ENCODE measurements at regions of chrX and their contacts with region 1.

Region 1: DNA sequence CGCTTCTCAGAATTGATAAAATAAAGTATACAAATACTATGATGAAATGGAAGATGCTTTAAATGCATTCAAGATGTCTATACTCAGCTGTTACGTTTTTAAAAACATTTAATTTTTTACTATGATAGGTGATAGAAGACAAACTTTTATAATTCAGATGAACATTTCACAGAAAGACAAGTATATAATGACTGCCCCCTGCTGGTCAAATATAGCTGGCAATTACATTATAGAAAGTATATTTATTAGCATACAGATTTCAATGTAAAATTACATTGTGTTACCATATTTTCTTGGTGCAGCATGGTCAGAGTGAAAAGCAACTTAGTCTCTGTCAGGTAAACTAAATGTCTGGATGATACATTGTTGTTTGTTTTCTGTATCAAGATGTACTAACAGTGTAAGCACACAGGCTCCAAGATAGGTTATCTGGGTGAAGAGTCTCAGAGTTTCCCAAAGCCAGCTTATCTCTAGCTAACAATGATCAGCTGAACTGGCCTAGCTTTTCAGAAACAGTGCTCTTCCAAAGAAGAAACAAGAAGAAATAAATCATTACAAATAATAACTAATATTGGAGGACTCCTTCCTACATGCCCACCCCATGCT is 54.1 kb downstream of the SRPX start:
- DNase-seq: no peak
- H3K4me3 Mint-ChIP-seq: no peak overlapping the region
- H3K27ac Mint-ChIP-seq: no peak overlapping the region
- H3K4me1 Mint-ChIP-seq: no peaks in the 10 kb centered on the region
- H3K27me3 Mint-ChIP-seq: no peaks in the 10 kb centered on the region

Region 2: DNA sequence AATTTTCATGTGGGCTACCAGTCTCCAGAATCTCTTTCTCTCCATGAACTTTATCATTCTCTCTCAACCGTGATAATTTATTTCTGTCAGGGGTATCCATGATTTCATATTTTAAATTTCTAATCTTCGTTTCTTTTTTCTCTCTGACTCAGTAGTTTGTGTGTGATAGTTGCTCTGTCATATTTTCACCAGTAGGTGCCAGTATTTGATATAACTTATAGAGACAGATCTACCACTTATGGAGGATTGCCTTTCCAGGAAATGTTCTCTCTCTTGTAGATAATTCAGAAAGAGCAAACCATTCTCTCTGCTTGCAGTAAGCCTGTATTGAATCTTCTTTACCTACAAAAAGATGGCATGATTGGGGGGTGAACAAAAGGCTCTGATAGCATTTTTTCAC is 239.9 kb before region 1 on chrX:
- CTCF ChIA-PET with region 1: interaction called, 24 read pairs
- POLR2A ChIA-PET with region 1: no interaction called
- intact Hi-C with region 1: loop called (anchors 1 kb)
- DNase-seq: no peak
- H3K4me3 Mint-ChIP-seq: no peak overlapping the region
- H3K27ac Mint-ChIP-seq: no peak overlapping the region
- H3K4me1 Mint-ChIP-seq: no peaks in the 10 kb centered on the region
- H3K27me3 Mint-ChIP-seq: no peaks in the 10 kb centered on the region

Region 3: DNA sequence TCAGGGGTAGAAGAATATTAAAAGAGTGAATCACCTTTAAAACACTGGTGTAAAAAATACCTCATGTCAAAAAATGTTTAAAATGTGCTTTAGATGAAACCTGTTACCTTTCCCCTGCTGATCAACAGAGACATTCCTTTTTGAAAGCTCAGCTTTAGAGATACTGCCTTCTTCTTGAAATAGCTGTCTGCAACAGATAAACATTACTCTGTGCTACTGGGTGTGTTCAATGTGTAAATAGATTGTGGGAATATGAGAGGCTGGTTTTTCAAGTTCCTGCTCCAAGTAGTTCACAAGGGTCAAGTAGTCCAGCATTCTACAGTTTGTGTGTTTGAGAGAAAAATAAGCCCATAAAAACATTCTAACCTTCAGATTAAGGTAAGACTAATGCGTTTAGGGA is 160.3 kb before region 1 on chrX and contains the start of gene SYTL5:
- CTCF ChIA-PET with region 1: no interaction called
- POLR2A ChIA-PET with region 1: no interaction called
- intact Hi-C with region 1: no loop called
- DNase-seq: no peak
- H3K4me3 Mint-ChIP-seq: no peak within 1 kb of the TSS
- H3K27ac Mint-ChIP-seq: no peak within 1 kb of the TSS
- H3K4me1 Mint-ChIP-seq: peaks cover 2% of the 10 kb centered on the region
- H3K27me3 Mint-ChIP-seq: peaks cover 8% of the 10 kb centered on the region
- total RNA-seq, gene SYTL5: 0.05 TPM in 1 of 2 experiments, not detected in the other

Measured in activated CD4-positive, alpha-beta memory T cell treated with anti-CD3 and anti-CD28 coated beads for 36 hours (primary cell).